IMR-90 (cell line): ENCODE measurements at regions of chr12 and their contacts with region 1.

Region 1: DNA sequence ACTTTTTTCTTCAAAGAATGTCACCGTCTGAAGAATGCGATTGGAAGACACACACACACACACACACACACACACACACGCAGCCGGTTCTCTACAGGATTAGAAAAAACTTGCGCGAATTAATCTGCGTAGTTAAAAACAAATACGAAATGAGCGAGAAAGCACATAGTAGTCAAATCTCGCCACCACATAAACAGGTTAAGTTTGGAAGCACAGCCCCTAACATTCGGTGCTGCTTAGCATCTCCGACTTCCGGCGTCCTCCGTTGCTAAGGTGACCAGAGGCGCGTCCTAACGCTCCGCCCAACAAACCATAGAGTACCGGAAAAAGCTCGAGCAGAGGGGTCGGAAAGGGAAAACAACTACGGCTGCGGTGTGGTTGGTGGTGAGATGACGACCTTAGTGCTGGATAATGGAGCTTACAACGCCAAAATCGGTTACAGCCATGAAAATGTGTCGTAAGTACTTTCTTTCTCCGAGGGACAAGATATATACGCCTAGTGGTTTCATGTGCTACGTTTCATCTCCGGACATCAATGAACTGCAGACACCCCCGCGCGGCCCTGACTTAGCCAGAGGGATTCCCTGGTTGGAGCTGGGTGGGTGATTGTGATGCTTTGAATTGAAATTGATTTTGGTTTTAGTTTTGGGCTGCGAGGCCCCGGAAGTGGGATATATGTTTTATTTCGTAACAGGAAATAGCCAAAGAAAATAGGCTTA is at the start of gene ACTR6:
- DNase-seq: peak; percentile 95
- ATAC-seq: peak; percentile 97
- H3K4me3 ChIP-seq: peak within 1 kb of the TSS; percentile 78
- H3K27ac ChIP-seq: peak within 1 kb of the TSS; percentile 79
- H3K4me1 ChIP-seq: peaks cover 2% of the 10 kb centered on the region; the same call in 1 of the 2 replicates
- H3K27me3 ChIP-seq: no peaks in the 10 kb centered on the region
- CTCF ChIP-seq: no peak; the same call in 1 of the 2 replicates
- POLR2A ChIP-seq: peak; percentile 58; the same call in 1 of the 2 replicates
- RAD21 ChIP-seq: no peak; the same call in 1 of the 2 replicates
- total RNA-seq, gene ACTR6: 10.2 and 20.6 TPM in 2 replicates

Region 2: GRCh38 chr12:99810718-99811593 is 389.7 kb before region 1 on chr12:
- CTCF ChIA-PET with region 1: no interaction called
- POLR2A ChIA-PET with region 1: no interaction called
- dilution Hi-C with region 1: no loop called
- in situ Hi-C with region 1: no loop called
- intact Hi-C with region 1: loop called (anchors 10 kb)
- DNase-seq: peak; percentile 18
- ATAC-seq: no peak
- H3K4me3 ChIP-seq: no peak overlapping the region
- H3K27ac ChIP-seq: no peak overlapping the region
- H3K4me1 ChIP-seq: no peaks in the 10 kb centered on the region
- H3K27me3 ChIP-seq: no peaks in the 10 kb centered on the region
- CTCF ChIP-seq: peak; percentile 33
- POLR2A ChIP-seq: no peak
- RAD21 ChIP-seq: peak; percentile 33; the same call in 1 of the 2 replicates

Region 3: DNA sequence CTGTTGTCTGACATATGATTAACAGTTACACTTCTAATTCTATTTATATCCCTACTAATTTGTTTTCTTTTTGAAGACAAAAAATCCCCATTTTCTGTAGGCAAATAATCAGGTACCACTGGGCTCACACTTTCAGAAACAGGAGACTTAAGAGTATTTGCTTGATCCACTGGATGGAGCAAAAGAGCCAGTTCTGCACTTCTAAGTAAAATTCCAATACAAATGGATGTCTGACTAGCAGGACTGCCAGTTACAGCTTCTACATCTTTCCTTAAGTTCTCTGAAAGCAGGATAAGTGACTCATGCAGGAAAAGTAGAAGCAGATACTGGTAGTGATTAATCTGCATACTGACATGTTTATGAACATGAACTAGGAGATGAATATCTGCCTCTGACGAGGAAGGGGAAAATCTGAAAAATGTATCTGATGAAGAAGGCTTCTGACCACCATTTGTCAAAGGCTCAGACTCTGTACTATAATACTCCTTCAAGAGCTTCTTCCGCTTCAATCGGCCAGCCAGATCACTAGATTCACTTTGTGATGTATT is 142.1 kb before region 1 on chr12:
- CTCF ChIA-PET with region 1: interaction called, 3 read pairs
- POLR2A ChIA-PET with region 1: no interaction called
- dilution Hi-C with region 1: no loop called
- in situ Hi-C with region 1: no loop called
- intact Hi-C with region 1: loop called (anchors 1 kb)
- DNase-seq: peak; percentile 96
- ATAC-seq: peak; percentile 91
- H3K4me3 ChIP-seq: no peak overlapping the region
- H3K27ac ChIP-seq: no peak overlapping the region
- H3K4me1 ChIP-seq: no peaks in the 10 kb centered on the region
- H3K27me3 ChIP-seq: no peaks in the 10 kb centered on the region
- CTCF ChIP-seq: peak; percentile 58
- POLR2A ChIP-seq: no peak
- RAD21 ChIP-seq: peak; percentile 73

Region 4: GRCh38 chr12:100142851-100143559 is 57.6 kb before region 1 on chr12 and contains the start of gene BLTP3B:
- CTCF ChIA-PET with region 1: no interaction called
- POLR2A ChIA-PET with region 1: no interaction called
- dilution Hi-C with region 1: no loop called
- in situ Hi-C with region 1: no loop called
- intact Hi-C with region 1: loop called (anchors 5 kb)
- DNase-seq: peak; percentile 55
- ATAC-seq: peak; percentile 97
- H3K4me3 ChIP-seq: peak within 1 kb of the TSS; percentile 91
- H3K27ac ChIP-seq: peak within 1 kb of the TSS; percentile 93
- H3K4me1 ChIP-seq: peaks cover 7% of the 10 kb centered on the region
- H3K27me3 ChIP-seq: no peaks in the 10 kb centered on the region
- CTCF ChIP-seq: no peak
- POLR2A ChIP-seq: no peak
- RAD21 ChIP-seq: no peak
- total RNA-seq, gene BLTP3B: 38.7 and 44.7 TPM in 2 replicates

Region 5: GRCh38 chr12:100154474-100155247 is 46.0 kb before region 1 on chr12:
- CTCF ChIA-PET with region 1: no interaction called
- POLR2A ChIA-PET with region 1: no interaction called
- dilution Hi-C with region 1: no loop called
- in situ Hi-C with region 1: no loop called
- intact Hi-C with region 1: loop called (anchors 2 kb)
- DNase-seq: peak; percentile 48
- ATAC-seq: peak; percentile 94
- H3K4me3 ChIP-seq: no peak overlapping the region
- H3K27ac ChIP-seq: no peak overlapping the region
- H3K4me1 ChIP-seq: no peaks in the 10 kb centered on the region
- H3K27me3 ChIP-seq: peaks cover 6% of the 10 kb centered on the region; the same call in 1 of the 2 replicates
- CTCF ChIP-seq: peak; percentile 65
- POLR2A ChIP-seq: no peak
- RAD21 ChIP-seq: peak; percentile 55

Region 6: DNA sequence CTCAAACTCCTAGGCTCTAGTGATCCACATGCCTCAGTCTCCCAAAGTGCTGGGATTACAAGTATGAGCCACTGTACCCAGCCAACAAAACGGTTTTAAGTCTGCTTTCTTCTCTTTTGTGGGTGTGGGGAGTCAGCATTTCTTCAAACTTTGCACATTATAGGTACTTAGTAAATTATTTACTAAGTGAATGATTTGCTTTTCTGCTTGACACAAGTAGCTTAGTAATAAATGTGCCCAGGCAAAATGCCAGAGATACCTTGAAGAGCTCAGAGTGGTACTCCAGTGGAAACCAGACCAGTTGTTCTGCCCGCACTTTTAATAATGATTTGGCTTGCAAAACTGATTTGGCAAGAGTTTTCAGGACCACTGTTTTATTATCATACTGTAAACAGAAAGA is 51.3 kb after region 1 on chr12:
- CTCF ChIA-PET with region 1: no interaction called
- POLR2A ChIA-PET with region 1: no interaction called
- dilution Hi-C with region 1: no loop called
- in situ Hi-C with region 1: no loop called
- intact Hi-C with region 1: no loop called
- DNase-seq: no peak
- ATAC-seq: no peak
- H3K4me3 ChIP-seq: no peak overlapping the region
- H3K27ac ChIP-seq: no peak overlapping the region
- H3K4me1 ChIP-seq: no peaks in the 10 kb centered on the region
- H3K27me3 ChIP-seq: no peaks in the 10 kb centered on the region
- CTCF ChIP-seq: no peak
- POLR2A ChIP-seq: no peak
- RAD21 ChIP-seq: no peak

Region 7: DNA sequence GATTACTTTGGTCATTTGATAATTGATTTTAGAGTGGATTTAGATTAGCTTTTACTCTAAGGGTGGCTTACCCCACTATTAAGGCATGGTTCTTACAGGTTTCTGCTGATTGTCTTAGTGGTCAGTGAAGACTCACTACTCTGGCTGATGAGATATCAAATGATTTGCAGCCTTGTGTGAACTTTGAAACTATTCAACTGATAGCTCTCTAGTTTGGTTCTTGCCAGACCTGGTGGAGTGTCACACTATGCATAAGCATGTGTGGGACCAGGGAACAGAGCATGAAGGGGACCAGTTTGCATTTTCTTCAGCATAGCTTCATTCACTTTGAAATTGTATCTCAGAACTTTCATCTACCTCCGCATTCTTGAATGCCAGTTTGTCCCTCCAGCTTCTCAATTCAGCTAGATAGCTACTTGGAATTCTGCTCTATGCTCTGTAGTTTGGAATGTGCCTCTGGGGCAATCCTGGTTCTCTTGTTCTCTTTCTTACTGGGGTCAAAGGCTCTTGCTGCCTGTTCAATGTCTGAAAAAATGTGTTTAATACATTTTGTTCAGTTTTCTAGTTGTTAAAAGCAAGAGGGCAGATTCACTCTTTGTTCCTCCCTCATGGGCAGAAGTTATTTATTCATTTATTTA is 79.1 kb after region 1 on chr12:
- CTCF ChIA-PET with region 1: no interaction called
- POLR2A ChIA-PET with region 1: interaction called, 12 read pairs
- dilution Hi-C with region 1: no loop called
- in situ Hi-C with region 1: no loop called
- intact Hi-C with region 1: no loop called
- DNase-seq: no peak
- ATAC-seq: peak; percentile 68
- H3K4me3 ChIP-seq: no peak overlapping the region
- H3K27ac ChIP-seq: no peak overlapping the region
- H3K4me1 ChIP-seq: peaks cover 2% of the 10 kb centered on the region; the same call in 1 of the 2 replicates
- H3K27me3 ChIP-seq: no peaks in the 10 kb centered on the region
- CTCF ChIP-seq: no peak
- POLR2A ChIP-seq: no peak
- RAD21 ChIP-seq: no peak